ENCODE measurements at regions of chr17 and their contacts with region 1.

Region 1: GRCh38 chr17:67475236-67475937 is 98.3 kb downstream of the PITPNC1 start:
- DNase-seq: peak; percentile 66 to 89 (median 86)
- ATAC-seq: peak; percentile 93
- H3K4me3 ChIP-seq: peak overlapping the region; percentile 22
- H3K4me3 Mint-ChIP-seq: peak overlapping the region; percentile 60 to 88 (median 84)
- H3K27ac ChIP-seq: peak overlapping the region; percentile 77
- H3K27ac Mint-ChIP-seq: peak overlapping the region; percentile 90 to 99 (median 98)
- H3K4me1 ChIP-seq: peaks cover 44 to 53% of the 10 kb centered on the region in 2 donors
- H3K4me1 Mint-ChIP-seq: peaks cover 37 to 85% (median 65%) of the 10 kb centered on the region in 7 donors
- H3K27me3 ChIP-seq: no peaks in the 10 kb centered on the region
- H3K27me3 Mint-ChIP-seq: no peaks in the 10 kb centered on the region

Region 2: DNA sequence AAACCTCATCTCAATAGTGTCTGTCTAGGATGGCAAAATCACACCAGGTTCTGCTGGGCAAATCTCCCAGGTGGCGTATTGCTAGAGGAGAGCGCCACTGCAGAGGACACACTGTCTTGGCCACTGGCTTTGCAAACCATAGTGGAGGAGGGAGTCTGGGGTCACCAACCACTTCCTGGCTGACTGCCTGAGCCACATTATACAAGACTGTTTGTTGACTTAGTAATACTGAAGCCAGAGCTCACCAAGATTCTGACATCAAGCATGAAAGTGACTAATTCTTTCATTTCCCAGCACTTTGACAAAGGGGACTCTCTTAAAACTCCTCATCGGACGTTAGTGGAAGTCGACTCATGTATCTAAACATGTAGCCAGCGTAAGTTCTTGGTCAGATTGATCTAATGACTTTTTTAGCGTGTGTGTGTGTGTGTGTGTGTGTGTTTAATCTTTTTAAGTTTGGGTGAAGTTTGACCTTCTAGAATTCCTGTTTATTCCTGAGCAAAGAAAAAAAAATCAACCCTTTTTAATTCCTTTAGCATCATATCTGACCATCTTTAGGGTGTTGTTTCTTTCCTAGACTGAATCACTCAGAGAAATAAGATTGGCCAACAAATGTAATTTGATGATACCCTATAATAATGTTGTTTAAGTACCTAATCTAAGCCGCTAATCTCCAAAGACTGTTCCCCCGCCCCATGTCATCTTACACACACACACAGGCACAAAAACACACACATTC is 84.6 kb before region 1 on chr17:
- CTCF ChIA-PET with region 1: interaction called, 33 read pairs
- POLR2A ChIA-PET with region 1: interaction called, 53 read pairs
- intact Hi-C with region 1: loop called (anchors 1 kb)
- DNase-seq: peak in 6 of 9 donors; percentile 50 to 74 (median 62)
- ATAC-seq: peak; percentile 89
- H3K4me3 ChIP-seq: peak overlapping the region; percentile 34
- H3K4me3 Mint-ChIP-seq: peak overlapping the region; percentile 66 to 90 (median 84)
- H3K27ac ChIP-seq: peak overlapping the region; percentile 76
- H3K27ac Mint-ChIP-seq: peak overlapping the region; percentile 85 to 99 (median 95)
- H3K4me1 ChIP-seq: peaks cover 29 to 46% of the 10 kb centered on the region in 2 donors
- H3K4me1 Mint-ChIP-seq: peaks cover 47 to 95% (median 73%) of the 10 kb centered on the region in 7 donors
- H3K27me3 ChIP-seq: no peaks in the 10 kb centered on the region
- H3K27me3 Mint-ChIP-seq: no peaks in the 10 kb centered on the region

Region 3: GRCh38 chr17:67421869-67422273 is 53.5 kb before region 1 on chr17:
- CTCF ChIA-PET with region 1: interaction called, 13 read pairs
- POLR2A ChIA-PET with region 1: interaction called, 41 read pairs
- intact Hi-C with region 1: loop called (anchors 1 kb)
- DNase-seq: peak in 8 of 9 donors; percentile 46 to 86 (median 82)
- ATAC-seq: peak; percentile 97
- H3K4me3 ChIP-seq: peak overlapping the region; percentile 19
- H3K4me3 Mint-ChIP-seq: peak overlapping the region; percentile 8 to 79 (median 69)
- H3K27ac ChIP-seq: peak overlapping the region; percentile 82
- H3K27ac Mint-ChIP-seq: peak overlapping the region; percentile 90 to 99 (median 97)
- H3K4me1 ChIP-seq: peaks cover 51 to 71% of the 10 kb centered on the region in 2 donors
- H3K4me1 Mint-ChIP-seq: peaks cover 54 to 100% (median 87%) of the 10 kb centered on the region in 7 donors
- H3K27me3 ChIP-seq: no peaks in the 10 kb centered on the region
- H3K27me3 Mint-ChIP-seq: no peaks in the 10 kb centered on the region

Region 4: GRCh38 chr17:67441052-67441927 is 34.1 kb before region 1 on chr17:
- CTCF ChIA-PET with region 1: interaction called, 48 read pairs
- POLR2A ChIA-PET with region 1: interaction called, 176 read pairs
- intact Hi-C with region 1: loop called (anchors 1 kb)
- DNase-seq: peak; percentile 30 to 90 (median 87)
- ATAC-seq: peak; percentile 94
- H3K4me3 ChIP-seq: peak overlapping the region; percentile 64
- H3K4me3 Mint-ChIP-seq: peak overlapping the region; percentile 75 to 88 (median 84)
- H3K27ac ChIP-seq: peak overlapping the region; percentile 93
- H3K27ac Mint-ChIP-seq: peak overlapping the region; percentile 95 to 100 (median 99)
- H3K4me1 ChIP-seq: peaks cover 66 to 87% of the 10 kb centered on the region in 2 donors
- H3K4me1 Mint-ChIP-seq: peaks cover 63 to 98% (median 90%) of the 10 kb centered on the region in 7 donors
- H3K27me3 ChIP-seq: no peaks in the 10 kb centered on the region
- H3K27me3 Mint-ChIP-seq: no peaks in the 10 kb centered on the region

Region 5: DNA sequence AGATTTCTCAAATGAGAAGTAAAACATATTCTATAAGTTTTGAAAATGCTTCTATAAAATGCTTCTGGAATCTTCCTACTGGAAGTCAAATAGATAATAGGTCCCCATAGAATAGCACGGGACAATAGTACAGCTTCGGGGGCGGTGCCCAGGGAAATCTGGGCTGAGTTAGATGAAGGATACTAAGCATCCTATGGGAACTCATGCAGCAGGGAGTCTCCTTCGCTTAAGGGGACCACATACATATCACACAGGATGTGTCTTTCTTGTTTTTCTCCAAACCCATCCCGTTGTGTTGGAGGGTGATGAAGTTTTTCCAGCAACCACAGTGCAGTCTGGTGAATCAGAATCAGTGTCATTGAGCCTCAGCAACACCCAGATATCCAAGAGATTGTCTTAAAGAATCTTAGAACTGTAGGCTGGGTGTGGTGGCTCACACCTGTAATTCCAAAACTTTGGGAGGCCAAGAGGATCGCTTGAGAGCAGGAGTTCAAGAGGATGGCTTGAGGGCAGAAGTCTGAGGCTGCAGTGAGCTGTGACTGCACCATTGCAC is 14.1 kb before region 1 on chr17:
- CTCF ChIA-PET with region 1: interaction called, 21 read pairs
- POLR2A ChIA-PET with region 1: interaction called, 31 read pairs
- intact Hi-C with region 1: loop called in 1 of 2 experiments (anchors 1 kb)
- DNase-seq: no peak
- ATAC-seq: no peak
- H3K4me3 ChIP-seq: no peak overlapping the region
- H3K4me3 Mint-ChIP-seq: peak overlapping the region; percentile 3 to 84 (median 52)
- H3K27ac ChIP-seq: peak overlapping the region; percentile 50
- H3K27ac Mint-ChIP-seq: peak overlapping the region; percentile 69 to 98 (median 95)
- H3K4me1 ChIP-seq: peaks cover 24 to 57% of the 10 kb centered on the region in 2 donors
- H3K4me1 Mint-ChIP-seq: peaks cover 47 to 91% (median 83%) of the 10 kb centered on the region in 7 donors
- H3K27me3 ChIP-seq: no peaks in the 10 kb centered on the region
- H3K27me3 Mint-ChIP-seq: no peaks in the 10 kb centered on the region

Region 6: DNA sequence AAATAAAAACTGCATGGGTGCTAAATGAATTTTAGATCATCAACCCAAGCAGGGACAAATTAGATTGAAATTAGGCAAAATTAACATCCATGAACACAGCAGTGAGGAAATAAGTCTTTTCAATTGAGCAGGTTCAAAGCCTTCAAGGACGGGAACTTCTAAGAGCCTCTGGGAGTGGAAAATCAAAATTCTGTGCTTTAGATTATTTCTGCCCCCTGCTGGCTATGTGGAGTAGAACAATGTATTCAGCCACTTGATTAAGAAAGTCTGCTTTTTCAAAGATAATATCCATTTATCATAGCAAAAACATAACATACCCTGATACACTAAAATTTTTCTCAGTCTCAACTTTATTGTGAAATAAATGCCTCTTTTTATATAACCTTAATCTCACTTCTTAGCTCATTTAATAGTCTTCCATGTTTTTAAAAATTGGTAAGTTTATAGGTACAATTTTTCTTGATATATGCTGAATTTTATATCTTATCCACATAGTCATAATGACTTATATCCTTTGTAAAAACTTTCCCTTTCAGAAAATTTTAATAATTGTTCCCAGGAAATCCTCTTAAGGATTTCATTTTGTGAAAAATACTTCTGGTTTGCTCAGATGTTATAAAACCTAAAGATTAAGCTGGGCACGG is 214.3 kb after region 1 on chr17:
- CTCF ChIA-PET with region 1: interaction called, 3 read pairs
- POLR2A ChIA-PET with region 1: no interaction called
- intact Hi-C with region 1: loop called (anchors 5 kb)
- DNase-seq: peak in 8 of 9 donors; percentile 30 to 72 (median 58)
- ATAC-seq: peak; percentile 76
- H3K4me3 ChIP-seq: no peak overlapping the region
- H3K4me3 Mint-ChIP-seq: no peak overlapping the region
- H3K27ac ChIP-seq: no peak overlapping the region
- H3K27ac Mint-ChIP-seq: peak overlapping the region in 1 of 9 donors; percentile 31
- H3K4me1 ChIP-seq: no peaks in the 10 kb centered on the region
- H3K4me1 Mint-ChIP-seq: peaks cover 0 to 7% (median 4%) of the 10 kb centered on the region in 7 donors
- H3K27me3 ChIP-seq: no peaks in the 10 kb centered on the region
- H3K27me3 Mint-ChIP-seq: no peaks in the 10 kb centered on the region